Activated CD4-positive, alpha-beta memory T cell treated with anti-CD3 and anti-CD28 coated beads for 36 hours (primary cell): ENCODE measurements at regions of chr5 and their contacts with region 1.

Region 1: DNA sequence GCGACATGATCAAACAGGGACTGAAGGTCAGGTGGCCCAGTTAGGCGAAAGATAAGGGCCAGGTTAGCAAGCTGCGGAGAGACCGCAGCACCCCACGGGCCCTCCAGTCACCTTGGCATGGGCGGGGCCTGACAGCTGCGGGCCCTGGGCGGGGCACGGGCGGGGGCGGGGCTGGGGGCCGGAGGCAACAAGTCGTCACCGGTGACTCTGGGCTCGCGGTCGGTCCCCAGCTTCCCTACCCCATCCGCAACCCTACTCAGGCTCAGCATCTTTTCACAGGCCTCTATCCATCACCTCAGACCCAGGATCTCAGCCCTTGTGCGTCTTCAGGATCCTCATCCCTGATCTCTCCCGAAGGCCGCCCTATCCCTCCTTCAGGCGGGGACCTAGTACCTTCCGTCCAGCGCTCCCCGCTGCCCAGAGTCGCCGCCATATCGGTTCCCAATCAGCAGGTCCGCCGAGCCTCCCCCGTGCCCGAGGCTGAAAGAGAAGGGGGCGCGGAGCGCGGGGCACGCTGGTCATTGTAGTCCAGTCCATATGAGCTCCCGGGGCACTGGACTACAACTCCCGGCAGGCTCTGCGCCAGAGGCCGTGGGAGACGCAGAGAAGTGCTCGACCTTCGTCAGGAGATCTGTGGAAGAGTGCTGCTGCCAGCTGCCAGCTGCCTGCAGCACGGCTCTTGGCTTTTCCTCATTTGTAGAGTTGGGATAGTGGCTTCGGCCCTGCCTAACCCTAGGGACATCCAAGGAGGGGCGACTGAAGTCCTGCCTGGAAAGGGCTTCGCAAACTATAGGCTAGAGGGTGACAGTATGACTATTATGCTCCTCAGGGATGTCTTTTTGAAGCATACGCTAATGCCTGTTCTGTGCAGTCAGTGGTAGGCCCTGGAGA is at the start of gene DNAJC18:
- DNase-seq: peak; percentile 96
- H3K4me3 Mint-ChIP-seq: peak within 1 kb of the TSS; percentile 98
- H3K27ac Mint-ChIP-seq: peak within 1 kb of the TSS; percentile 99
- H3K4me1 Mint-ChIP-seq: peaks cover 62% of the 10 kb centered on the region
- H3K27me3 Mint-ChIP-seq: no peaks in the 10 kb centered on the region
- total RNA-seq, gene DNAJC18: 54.1 to 56.0 TPM

Region 2: GRCh38 chr5:139197710-139198669 is 241.3 kb before region 1 on chr5 and contains the start of gene SIL1:
- CTCF ChIA-PET with region 1: no interaction called
- POLR2A ChIA-PET with region 1: no interaction called
- intact Hi-C with region 1: loop called (anchors 1 kb)
- DNase-seq: peak; percentile 99
- H3K4me3 Mint-ChIP-seq: peak within 1 kb of the TSS; percentile 98
- H3K27ac Mint-ChIP-seq: peak within 1 kb of the TSS; percentile 95
- H3K4me1 Mint-ChIP-seq: peaks cover 20% of the 10 kb centered on the region
- H3K27me3 Mint-ChIP-seq: no peaks in the 10 kb centered on the region
- total RNA-seq, gene SIL1: 27.2 to 30.3 TPM

Region 3: GRCh38 chr5:139458580-139459406 is 19.5 kb after region 1 on chr5:
- CTCF ChIA-PET with region 1: interaction called, 29 read pairs
- POLR2A ChIA-PET with region 1: interaction called, 45 read pairs
- intact Hi-C with region 1: loop called (anchors 1 kb)
- DNase-seq: peak; percentile 90
- H3K4me3 Mint-ChIP-seq: peak overlapping the region; percentile 56
- H3K27ac Mint-ChIP-seq: peak overlapping the region; percentile 97
- H3K4me1 Mint-ChIP-seq: peaks cover 65% of the 10 kb centered on the region
- H3K27me3 Mint-ChIP-seq: no peaks in the 10 kb centered on the region

Region 4: DNA sequence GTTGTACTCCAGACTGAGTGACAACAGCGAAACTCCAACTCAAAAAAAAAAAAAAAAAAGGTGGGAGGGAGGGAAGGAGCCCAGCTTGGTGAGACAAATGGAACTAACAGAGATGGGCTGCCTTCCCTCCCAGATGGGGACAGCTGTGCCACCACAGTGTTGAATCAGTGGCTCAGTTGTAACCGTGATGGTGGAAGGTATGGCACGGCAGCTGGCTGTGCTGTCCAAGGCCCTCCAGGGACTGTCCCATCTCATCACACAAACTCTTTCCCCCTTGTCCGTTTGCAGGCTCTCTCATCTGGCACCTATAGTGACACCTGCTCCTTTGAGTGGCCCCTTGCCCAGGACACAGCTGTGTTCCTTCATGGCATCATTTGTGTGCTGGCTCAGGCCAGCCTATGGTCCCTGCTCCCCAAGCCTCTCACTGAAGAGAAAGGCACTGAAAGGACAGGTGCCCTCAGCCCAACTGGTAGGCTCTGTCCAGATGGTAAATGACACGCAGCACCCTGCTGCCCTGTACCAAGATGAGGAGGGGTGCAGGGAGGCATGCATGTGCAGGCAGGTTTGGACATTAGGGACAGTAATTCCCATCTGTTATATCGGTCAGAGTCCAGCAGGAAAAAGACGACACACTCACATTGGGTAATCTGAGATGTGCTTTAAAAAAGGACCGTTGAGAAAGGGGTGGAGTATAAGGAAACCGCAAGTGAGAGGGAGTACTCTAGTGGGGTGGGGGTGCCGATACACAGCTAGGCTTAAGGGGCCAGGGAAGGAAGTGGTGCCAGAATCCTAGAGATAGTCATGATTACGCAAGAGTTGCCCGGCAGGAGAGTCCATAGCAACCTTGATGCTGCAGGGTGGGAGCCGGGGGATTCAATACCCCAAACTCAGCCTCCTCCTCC is 35.9 kb after region 1 on chr5:
- CTCF ChIA-PET with region 1: interaction called, 10 read pairs
- POLR2A ChIA-PET with region 1: interaction called, 69 read pairs
- intact Hi-C with region 1: loop called (anchors 1 kb)
- DNase-seq: peak; percentile 55
- H3K4me3 Mint-ChIP-seq: peak overlapping the region; percentile 20
- H3K27ac Mint-ChIP-seq: peak overlapping the region; percentile 93
- H3K4me1 Mint-ChIP-seq: peaks cover 89% of the 10 kb centered on the region
- H3K27me3 Mint-ChIP-seq: no peaks in the 10 kb centered on the region

Region 5: DNA sequence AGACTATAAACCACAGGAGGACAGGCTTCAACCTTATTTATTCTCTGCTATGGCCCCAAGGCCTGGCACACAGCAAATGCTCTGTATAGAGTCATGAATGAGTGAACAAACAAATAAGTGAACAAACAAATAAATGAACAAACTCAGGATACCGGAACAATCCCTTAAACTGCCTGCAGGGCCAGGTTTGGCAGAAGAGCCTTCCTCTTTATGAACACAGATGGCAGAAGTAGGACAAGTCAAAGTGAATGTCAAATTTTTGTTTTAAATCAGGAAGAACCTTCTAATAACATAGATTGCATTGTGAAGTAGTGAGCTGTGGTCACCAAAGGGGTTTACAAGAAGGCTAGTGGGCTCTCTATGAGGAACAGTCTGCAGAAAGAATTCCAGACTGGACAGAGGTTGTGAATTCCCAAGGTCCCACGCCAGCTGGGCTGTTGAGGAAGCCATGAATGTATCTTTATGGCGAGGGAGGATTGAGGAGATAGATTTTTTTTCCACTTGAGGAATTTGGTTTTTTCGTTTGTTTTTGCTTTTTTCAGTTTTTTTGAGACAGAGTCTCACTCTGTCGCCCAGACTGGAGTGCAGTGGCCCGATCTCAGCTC is 73.6 kb after region 1 on chr5:
- CTCF ChIA-PET with region 1: interaction called, 51 read pairs
- POLR2A ChIA-PET with region 1: interaction called, 16 read pairs
- intact Hi-C with region 1: loop called (anchors 5 kb)
- DNase-seq: no peak
- H3K4me3 Mint-ChIP-seq: no peak overlapping the region
- H3K27ac Mint-ChIP-seq: peak overlapping the region; percentile 79
- H3K4me1 Mint-ChIP-seq: peaks cover 55% of the 10 kb centered on the region
- H3K27me3 Mint-ChIP-seq: no peaks in the 10 kb centered on the region